ENCODE measurements at regions of chr16 and their contacts with region 1.

Region 1: GRCh38 chr16:68704232-68704867 is 32.7 kb upstream of the CDH1 start:
- DNase-seq: no peak
- H3K4me3 ChIP-seq: no peak overlapping the region
- H3K27ac ChIP-seq: no peak overlapping the region
- H3K4me1 ChIP-seq: no peaks in the 10 kb centered on the region
- H3K27me3 ChIP-seq: no peaks in the 10 kb centered on the region
- CTCF ChIP-seq: peak in 3 of 4 experiments; percentile 58 to 79 (median 60)
- EP300 ChIP-seq: no peak
- POLR2A ChIP-seq: no peak

Region 2: GRCh38 chr16:68520649-68521086 is 183.7 kb before region 1 on chr16:
- intact Hi-C with region 1: loop called (anchors 5 kb)
- DNase-seq: peak; percentile 92
- H3K4me3 ChIP-seq: peak overlapping the region in 3 of 4 donors; percentile 26 to 39 (median 34)
- H3K27ac ChIP-seq: no peak overlapping the region
- H3K4me1 ChIP-seq: peaks cover 0 to 7% (median 1%) of the 10 kb centered on the region in 4 donors
- H3K27me3 ChIP-seq: no peaks in the 10 kb centered on the region
- CTCF ChIP-seq: peak; percentile 88 to 96 (median 92)
- EP300 ChIP-seq: no peak
- POLR2A ChIP-seq: no peak

Region 3: GRCh38 chr16:68800257-68800875 is 96.0 kb after region 1 on chr16:
- intact Hi-C with region 1: loop called (anchors 1 kb)
- DNase-seq: peak; percentile 71
- H3K4me3 ChIP-seq: no peak overlapping the region
- H3K27ac ChIP-seq: no peak overlapping the region
- H3K4me1 ChIP-seq: peaks cover 0 to 5% (median 0%) of the 10 kb centered on the region in 4 donors
- H3K27me3 ChIP-seq: no peaks in the 10 kb centered on the region
- CTCF ChIP-seq: peak; percentile 22 to 67 (median 56)
- EP300 ChIP-seq: no peak
- POLR2A ChIP-seq: no peak

Region 4: DNA sequence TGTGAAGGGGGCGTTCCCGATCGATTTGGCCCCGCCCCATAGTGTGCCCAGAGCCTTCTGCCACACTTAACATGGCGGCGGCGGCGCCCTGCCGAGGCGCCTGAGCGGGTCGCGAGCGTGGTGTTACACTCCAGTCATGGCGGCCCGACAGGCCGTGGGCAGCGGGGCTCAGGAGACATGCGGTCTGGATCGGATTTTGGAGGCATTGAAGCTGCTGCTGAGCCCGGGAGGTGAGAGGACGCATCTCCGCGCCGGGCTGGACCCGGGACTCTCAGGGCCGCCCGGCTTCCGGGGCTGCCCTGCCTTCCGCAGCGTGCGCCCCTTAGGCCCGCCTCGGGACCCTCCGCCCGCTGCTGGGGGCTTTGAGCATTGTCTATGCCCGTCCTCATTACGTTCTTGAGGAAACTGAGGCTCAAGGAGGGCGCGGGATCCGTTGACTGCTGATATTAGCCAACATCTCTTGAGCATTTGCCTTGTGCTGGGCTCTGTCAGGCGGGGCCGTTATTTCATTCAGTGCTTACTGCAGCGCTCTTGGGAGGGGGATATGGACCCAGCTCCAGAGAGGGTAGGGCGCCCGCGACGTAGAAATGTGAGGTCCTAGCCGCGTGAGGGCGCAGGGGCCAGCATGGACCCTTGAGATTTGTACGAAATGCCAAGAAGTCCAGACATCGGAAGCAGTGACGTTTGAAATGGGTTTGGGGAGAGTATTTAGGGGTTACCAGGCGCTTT is 139.3 kb after region 1 on chr16 and contains the start of gene TANGO6:
- intact Hi-C with region 1: loop called (anchors 10 kb)
- DNase-seq: peak; percentile 91
- H3K4me3 ChIP-seq: peak within 1 kb of the TSS; percentile 73 to 93 (median 90)
- H3K27ac ChIP-seq: peak within 1 kb of the TSS; percentile 84 to 94 (median 90)
- H3K4me1 ChIP-seq: peaks cover 0 to 35% (median 23%) of the 10 kb centered on the region in 4 donors
- H3K27me3 ChIP-seq: no peaks in the 10 kb centered on the region
- CTCF ChIP-seq: no peak
- EP300 ChIP-seq: no peak
- POLR2A ChIP-seq: peak in 1 of 2 donors; percentile 22
- total RNA-seq, gene TANGO6: 16.0 to 23.5 (median 20.0) TPM

Region 5: GRCh38 chr16:69112285-69113129 is 408.2 kb after region 1 on chr16:
- intact Hi-C with region 1: loop called (anchors 10 kb)
- DNase-seq: peak; percentile 67
- H3K4me3 ChIP-seq: no peak overlapping the region
- H3K27ac ChIP-seq: no peak overlapping the region
- H3K4me1 ChIP-seq: peaks cover 0 to 13% (median 10%) of the 10 kb centered on the region in 4 donors
- H3K27me3 ChIP-seq: peaks cover 0 to 22% (median 9%) of the 10 kb centered on the region in 3 donors
- CTCF ChIP-seq: peak in 2 of 4 experiments; percentile 13 to 59
- EP300 ChIP-seq: no peak
- POLR2A ChIP-seq: no peak